Caco-2 (cell line): ENCODE measurements at regions of chr11 and their contacts with region 1.

Region 1: GRCh38 chr11:66958232-66958955 is at the start of gene PC:
- DNase-seq: peak; percentile 100
- H3K4me3 ChIP-seq: peak within 1 kb of the TSS; percentile 58
- H3K4me3 Mint-ChIP-seq: peak within 1 kb of the TSS; percentile 77
- H3K27ac Mint-ChIP-seq: peak within 1 kb of the TSS; percentile 64
- H3K4me1 ChIP-seq: peaks cover 12% of the 10 kb centered on the region
- H3K4me1 Mint-ChIP-seq: peaks cover 22% of the 10 kb centered on the region
- H3K27me3 ChIP-seq: no peaks in the 10 kb centered on the region
- H3K27me3 Mint-ChIP-seq: no peaks in the 10 kb centered on the region
- CTCF ChIP-seq: no peak
- total RNA-seq, gene PC: 22.5 and 25.8 TPM in 2 replicates

Region 2: GRCh38 chr11:66820901-66821300 is 137.5 kb before region 1 on chr11:
- CTCF ChIA-PET with region 1: no interaction called
- POLR2A ChIA-PET with region 1: no interaction called
- intact Hi-C with region 1: no loop called
- DNase-seq: no peak
- H3K4me3 ChIP-seq: no peak overlapping the region
- H3K4me3 Mint-ChIP-seq: no peak overlapping the region
- H3K27ac Mint-ChIP-seq: no peak overlapping the region
- H3K4me1 ChIP-seq: peaks cover 41% of the 10 kb centered on the region
- H3K4me1 Mint-ChIP-seq: peaks cover 13% of the 10 kb centered on the region
- H3K27me3 ChIP-seq: no peaks in the 10 kb centered on the region
- H3K27me3 Mint-ChIP-seq: no peaks in the 10 kb centered on the region
- CTCF ChIP-seq: no peak

Region 3: GRCh38 chr11:66842896-66843775 is 115.3 kb before region 1 on chr11 and contains the start of gene RCE1:
- CTCF ChIA-PET with region 1: no interaction called
- POLR2A ChIA-PET with region 1: interaction called, 13 read pairs
- intact Hi-C with region 1: no loop called
- DNase-seq: peak; percentile 94 to 98
- H3K4me3 ChIP-seq: peak within 1 kb of the TSS; percentile 89
- H3K4me3 Mint-ChIP-seq: peak within 1 kb of the TSS; percentile 83
- H3K27ac Mint-ChIP-seq: peak within 1 kb of the TSS; percentile 85
- H3K4me1 ChIP-seq: peaks cover 6% of the 10 kb centered on the region
- H3K4me1 Mint-ChIP-seq: peaks cover 13% of the 10 kb centered on the region
- H3K27me3 ChIP-seq: no peaks in the 10 kb centered on the region
- H3K27me3 Mint-ChIP-seq: no peaks in the 10 kb centered on the region
- CTCF ChIP-seq: no peak
- total RNA-seq, gene RCE1: 57.6 and 60.7 TPM in 2 replicates

Region 4: GRCh38 chr11:66868726-66869566 is 89.4 kb before region 1 on chr11:
- CTCF ChIA-PET with region 1: interaction called, 4 read pairs
- POLR2A ChIA-PET with region 1: no interaction called
- intact Hi-C with region 1: loop called (anchors 5 kb)
- DNase-seq: peak; percentile 93 to 94
- H3K4me3 ChIP-seq: no peak overlapping the region
- H3K4me3 Mint-ChIP-seq: no peak overlapping the region
- H3K27ac Mint-ChIP-seq: no peak overlapping the region
- H3K4me1 ChIP-seq: peaks cover 4% of the 10 kb centered on the region; the same call in 1 of the 2 replicates
- H3K4me1 Mint-ChIP-seq: no peaks in the 10 kb centered on the region
- H3K27me3 ChIP-seq: no peaks in the 10 kb centered on the region
- H3K27me3 Mint-ChIP-seq: no peaks in the 10 kb centered on the region
- CTCF ChIP-seq: peak; percentile 88 to 94

Region 5: GRCh38 chr11:67053896-67054842 is 95.8 kb after region 1 on chr11:
- CTCF ChIA-PET with region 1: interaction called, 4 read pairs
- POLR2A ChIA-PET with region 1: interaction called, 16 read pairs
- intact Hi-C with region 1: no loop called
- DNase-seq: peak; percentile 83 to 85
- H3K4me3 ChIP-seq: no peak overlapping the region
- H3K4me3 Mint-ChIP-seq: no peak overlapping the region
- H3K27ac Mint-ChIP-seq: peak overlapping the region; percentile 92
- H3K4me1 ChIP-seq: peaks cover 40% of the 10 kb centered on the region
- H3K4me1 Mint-ChIP-seq: peaks cover 26% of the 10 kb centered on the region
- H3K27me3 ChIP-seq: no peaks in the 10 kb centered on the region
- H3K27me3 Mint-ChIP-seq: no peaks in the 10 kb centered on the region
- CTCF ChIP-seq: peak; percentile 96 to 99

Region 6: DNA sequence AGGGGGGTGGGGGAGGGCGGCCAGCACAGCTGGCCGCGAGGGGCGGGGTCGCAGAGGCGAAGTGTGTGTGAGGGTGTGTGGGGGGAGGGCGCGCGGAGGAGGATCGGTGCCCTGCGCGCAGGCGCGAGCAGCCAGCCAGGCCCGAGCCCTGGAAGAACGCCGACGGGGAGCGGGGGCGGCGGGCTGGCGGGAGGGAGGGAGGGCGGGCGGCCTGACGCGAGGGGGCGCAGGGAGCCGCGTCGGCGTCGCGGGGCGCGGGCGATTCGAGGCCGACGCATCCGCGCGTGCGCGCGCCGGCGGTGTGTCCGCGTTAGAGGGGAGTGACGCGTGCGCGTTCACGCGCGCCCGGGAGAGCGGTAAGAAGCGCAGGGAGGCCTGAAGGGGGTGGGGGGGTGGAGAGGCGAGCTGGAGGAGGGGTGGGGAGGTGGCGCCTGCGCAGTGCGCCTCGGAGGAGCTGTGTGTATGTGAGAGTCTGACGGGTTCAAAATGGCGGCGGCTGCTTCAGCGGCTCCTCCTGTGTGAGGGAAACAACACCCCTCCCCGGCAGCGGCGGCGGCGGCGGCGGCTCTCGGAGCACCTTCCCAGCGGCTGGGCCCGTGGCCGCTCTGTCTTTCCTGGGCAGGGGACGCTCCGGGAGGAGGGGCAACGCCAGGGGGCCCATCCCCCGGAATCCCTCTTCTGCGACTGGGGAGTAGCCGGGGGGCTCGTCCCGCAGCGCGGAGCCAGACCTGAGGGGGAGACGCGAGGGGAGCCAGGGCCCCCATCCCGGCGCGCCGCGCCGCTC is 160.6 kb after region 1 on chr11 and contains the start of gene KDM2A:
- CTCF ChIA-PET with region 1: no interaction called
- POLR2A ChIA-PET with region 1: no interaction called
- intact Hi-C with region 1: loop called (anchors 2 kb)
- DNase-seq: peak; percentile 99 to 100
- H3K4me3 ChIP-seq: peak within 1 kb of the TSS; percentile 92
- H3K4me3 Mint-ChIP-seq: peak within 1 kb of the TSS; percentile 99
- H3K27ac Mint-ChIP-seq: peak within 1 kb of the TSS; percentile 96
- H3K4me1 ChIP-seq: peaks cover 54% of the 10 kb centered on the region
- H3K4me1 Mint-ChIP-seq: peaks cover 22% of the 10 kb centered on the region
- H3K27me3 ChIP-seq: no peaks in the 10 kb centered on the region
- H3K27me3 Mint-ChIP-seq: no peaks in the 10 kb centered on the region
- CTCF ChIP-seq: peak in 1 of 2 experiments; percentile 47
- total RNA-seq, gene KDM2A: 122 and 134 TPM in 2 replicates